Uterus (tissue), 4 donors: ENCODE measurements at regions of chr19 and their contacts with region 1.

Region 1: GRCh38 chr19:4149518-4150288 is 3.7 kb upstream of the CREB3L3 start:
- DNase-seq: no peak
- H3K4me3 ChIP-seq: no peak overlapping the region
- H3K27ac ChIP-seq: no peak overlapping the region
- H3K4me1 ChIP-seq: no peaks in the 10 kb centered on the region
- H3K27me3 ChIP-seq: no peaks in the 10 kb centered on the region
- CTCF ChIP-seq: no peak
- POLR2A ChIP-seq: no peak

Region 2: GRCh38 chr19:4217429-4218264 is 67.9 kb after region 1 on chr19:
- intact Hi-C with region 1: loop called (anchors 10 kb)
- DNase-seq: no peak
- H3K4me3 ChIP-seq: no peak overlapping the region
- H3K27ac ChIP-seq: no peak overlapping the region
- H3K4me1 ChIP-seq: no peaks in the 10 kb centered on the region
- H3K27me3 ChIP-seq: no peaks in the 10 kb centered on the region
- CTCF ChIP-seq: no peak
- POLR2A ChIP-seq: no peak